ENCODE measurements at regions of chr3 and their contacts with region 1.

Region 1: GRCh38 chr3:192851821-192852424 is 65.7 kb downstream of the MB21D2 start:
- DNase-seq: no peak
- H3K4me3 Mint-ChIP-seq: no peak overlapping the region
- H3K27ac Mint-ChIP-seq: peak overlapping the region; percentile 38
- H3K4me1 Mint-ChIP-seq: peaks cover 46% of the 10 kb centered on the region
- H3K27me3 Mint-ChIP-seq: no peaks in the 10 kb centered on the region

Region 2: GRCh38 chr3:192816351-192816750 is 35.6 kb before region 1 on chr3:
- intact Hi-C with region 1: loop called (anchors 1 kb)
- DNase-seq: no peak
- H3K4me3 Mint-ChIP-seq: no peak overlapping the region
- H3K27ac Mint-ChIP-seq: no peak overlapping the region
- H3K4me1 Mint-ChIP-seq: peaks cover 45% of the 10 kb centered on the region
- H3K27me3 Mint-ChIP-seq: peaks cover 3% of the 10 kb centered on the region

Region 3: GRCh38 chr3:192887047-192887446 is 35.1 kb after region 1 on chr3:
- intact Hi-C with region 1: loop called (anchors 1 kb)
- DNase-seq: no peak
- H3K4me3 Mint-ChIP-seq: peak overlapping the region; percentile 17
- H3K27ac Mint-ChIP-seq: peak overlapping the region; percentile 75
- H3K4me1 Mint-ChIP-seq: peaks cover 55% of the 10 kb centered on the region
- H3K27me3 Mint-ChIP-seq: peaks cover 2% of the 10 kb centered on the region

Region 4: GRCh38 chr3:192899540-192899982 is 47.6 kb after region 1 on chr3:
- intact Hi-C with region 1: loop called (anchors 1 kb)
- DNase-seq: no peak
- H3K4me3 Mint-ChIP-seq: no peak overlapping the region
- H3K27ac Mint-ChIP-seq: peak overlapping the region; percentile 79
- H3K4me1 Mint-ChIP-seq: peaks cover 55% of the 10 kb centered on the region
- H3K27me3 Mint-ChIP-seq: peaks cover 12% of the 10 kb centered on the region

Region 5: DNA sequence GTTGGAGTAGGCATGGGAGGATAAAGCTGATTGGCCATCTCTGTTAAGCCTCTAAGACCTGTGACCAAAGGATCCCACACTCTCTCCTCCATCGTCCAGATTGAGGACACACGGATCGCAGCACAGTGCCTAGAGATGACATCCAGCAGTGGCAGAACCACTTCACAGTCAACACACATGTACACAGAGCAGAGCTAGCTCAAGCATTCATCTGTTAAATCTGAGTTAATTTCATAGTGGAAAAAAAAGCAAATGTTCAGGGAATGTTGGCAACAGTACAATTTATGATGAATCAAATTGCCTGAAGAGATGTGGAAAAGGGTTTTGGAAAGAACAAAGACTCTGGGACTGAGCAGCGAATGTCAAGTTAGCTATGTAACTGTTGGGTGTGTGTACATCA is 281.0 kb after region 1 on chr3:
- intact Hi-C with region 1: no loop called
- DNase-seq: no peak
- H3K4me3 Mint-ChIP-seq: no peak overlapping the region
- H3K27ac Mint-ChIP-seq: no peak overlapping the region
- H3K4me1 Mint-ChIP-seq: no peaks in the 10 kb centered on the region
- H3K27me3 Mint-ChIP-seq: no peaks in the 10 kb centered on the region

Measured in activated T-helper 2 cell treated with anti-CD3 and anti-CD28 coated beads, Interferon-gamma antibody, Interleukin-2, Interleukin-4, amounts not matched to agents 10 μg/mL and 5 μg/mL and 100 μg/mL, durations not matched to agents 14 hours and 24 hours and 36 hours (primary cell).